ENCODE measurements at regions of chr4 and their contacts with region 1.

Region 1: GRCh38 chr4:88514557-88515511 is 8.7 kb downstream of the PYURF start:
- DNase-seq: no peak
- ATAC-seq: no peak
- H3K4me3 ChIP-seq: no peak overlapping the region
- H3K27ac ChIP-seq: no peak overlapping the region
- H3K4me1 ChIP-seq: no peaks in the 10 kb centered on the region
- H3K27me3 ChIP-seq: no peaks in the 10 kb centered on the region
- CTCF ChIP-seq: no peak
- EP300 ChIP-seq: no peak
- POLR2A ChIP-seq: no peak
- RAD21 ChIP-seq: no peak

Region 2: DNA sequence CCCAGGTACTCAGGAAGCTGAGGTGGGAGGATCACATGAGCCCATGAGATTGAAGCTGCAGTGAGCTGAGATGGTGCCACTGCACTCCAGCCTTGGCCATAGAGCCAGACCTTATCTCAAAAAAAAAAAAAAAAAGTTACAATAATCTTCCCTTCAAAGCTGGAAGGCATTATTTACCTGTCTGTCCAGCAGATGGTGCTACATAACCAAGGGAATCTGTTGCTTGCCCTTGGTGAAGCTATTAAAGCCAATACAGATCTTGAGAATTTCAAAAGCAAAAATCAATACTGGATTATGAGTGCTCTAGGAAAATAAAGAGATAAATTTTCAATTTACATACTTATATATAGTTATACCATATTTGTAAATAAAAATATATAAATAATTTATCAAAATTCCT is 481.5 kb before region 1 on chr4:
- CTCF ChIA-PET with region 1: interaction called, 17 read pairs
- POLR2A ChIA-PET with region 1: no interaction called
- RAD21 ChIA-PET with region 1: interaction called, 16 read pairs
- SMC1A ChIA-PET with region 1: interaction called, 8 read pairs
- in situ Hi-C with region 1: loop called (anchors 5 kb)
- intact Hi-C with region 1: loop called (anchors 2 kb)
- DNase-seq: no peak
- ATAC-seq: peak; percentile 87
- H3K4me3 ChIP-seq: no peak overlapping the region
- H3K27ac ChIP-seq: no peak overlapping the region
- H3K4me1 ChIP-seq: no peaks in the 10 kb centered on the region
- H3K27me3 ChIP-seq: no peaks in the 10 kb centered on the region
- CTCF ChIP-seq: peak; percentile 51 to 66 (median 64)
- EP300 ChIP-seq: no peak
- POLR2A ChIP-seq: no peak
- RAD21 ChIP-seq: peak; percentile 78

Region 3: GRCh38 chr4:88054901-88055300 is 459.9 kb before region 1 on chr4:
- CTCF ChIA-PET with region 1: no interaction called
- POLR2A ChIA-PET with region 1: no interaction called
- RAD21 ChIA-PET with region 1: no interaction called
- SMC1A ChIA-PET with region 1: no interaction called
- in situ Hi-C with region 1: no loop called
- intact Hi-C with region 1: no loop called
- DNase-seq: no peak
- ATAC-seq: peak; percentile 63
- H3K4me3 ChIP-seq: no peak overlapping the region
- H3K27ac ChIP-seq: no peak overlapping the region
- H3K4me1 ChIP-seq: no peaks in the 10 kb centered on the region
- H3K27me3 ChIP-seq: no peaks in the 10 kb centered on the region
- CTCF ChIP-seq: peak; percentile 20 to 44 (median 23); a peak in 4 of 6 replicates
- EP300 ChIP-seq: no peak
- POLR2A ChIP-seq: no peak
- RAD21 ChIP-seq: peak; percentile 35; the same call in 1 of the 2 replicates

Region 4: DNA sequence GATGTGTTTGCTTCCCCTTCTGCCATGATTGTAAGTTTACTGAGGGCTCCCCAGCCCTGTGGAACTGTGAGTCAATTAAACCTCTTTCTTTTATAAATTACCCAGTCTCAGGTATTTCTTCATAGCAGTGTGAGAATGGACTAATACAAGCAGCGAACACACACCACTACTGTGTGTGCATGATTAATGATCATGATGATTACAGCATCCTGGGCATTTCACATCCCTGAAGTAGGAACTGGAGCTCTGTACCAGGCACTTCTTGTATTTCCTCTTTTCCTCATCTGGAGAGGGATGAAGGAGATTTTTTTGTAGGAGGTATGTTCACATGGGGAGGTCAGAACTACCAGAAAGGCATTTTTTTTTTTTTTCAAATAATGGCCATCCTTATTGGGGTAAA is 291.3 kb before region 1 on chr4:
- CTCF ChIA-PET with region 1: interaction called, 172 read pairs
- POLR2A ChIA-PET with region 1: no interaction called
- RAD21 ChIA-PET with region 1: interaction called, 106 read pairs
- SMC1A ChIA-PET with region 1: interaction called, 112 read pairs
- in situ Hi-C with region 1: loop called (anchors 5 kb)
- intact Hi-C with region 1: loop called (anchors 1 kb)
- DNase-seq: no peak
- ATAC-seq: no peak
- H3K4me3 ChIP-seq: no peak overlapping the region
- H3K27ac ChIP-seq: no peak overlapping the region
- H3K4me1 ChIP-seq: no peaks in the 10 kb centered on the region
- H3K27me3 ChIP-seq: no peaks in the 10 kb centered on the region
- CTCF ChIP-seq: no peak
- EP300 ChIP-seq: no peak
- POLR2A ChIP-seq: no peak
- RAD21 ChIP-seq: no peak

Region 5: DNA sequence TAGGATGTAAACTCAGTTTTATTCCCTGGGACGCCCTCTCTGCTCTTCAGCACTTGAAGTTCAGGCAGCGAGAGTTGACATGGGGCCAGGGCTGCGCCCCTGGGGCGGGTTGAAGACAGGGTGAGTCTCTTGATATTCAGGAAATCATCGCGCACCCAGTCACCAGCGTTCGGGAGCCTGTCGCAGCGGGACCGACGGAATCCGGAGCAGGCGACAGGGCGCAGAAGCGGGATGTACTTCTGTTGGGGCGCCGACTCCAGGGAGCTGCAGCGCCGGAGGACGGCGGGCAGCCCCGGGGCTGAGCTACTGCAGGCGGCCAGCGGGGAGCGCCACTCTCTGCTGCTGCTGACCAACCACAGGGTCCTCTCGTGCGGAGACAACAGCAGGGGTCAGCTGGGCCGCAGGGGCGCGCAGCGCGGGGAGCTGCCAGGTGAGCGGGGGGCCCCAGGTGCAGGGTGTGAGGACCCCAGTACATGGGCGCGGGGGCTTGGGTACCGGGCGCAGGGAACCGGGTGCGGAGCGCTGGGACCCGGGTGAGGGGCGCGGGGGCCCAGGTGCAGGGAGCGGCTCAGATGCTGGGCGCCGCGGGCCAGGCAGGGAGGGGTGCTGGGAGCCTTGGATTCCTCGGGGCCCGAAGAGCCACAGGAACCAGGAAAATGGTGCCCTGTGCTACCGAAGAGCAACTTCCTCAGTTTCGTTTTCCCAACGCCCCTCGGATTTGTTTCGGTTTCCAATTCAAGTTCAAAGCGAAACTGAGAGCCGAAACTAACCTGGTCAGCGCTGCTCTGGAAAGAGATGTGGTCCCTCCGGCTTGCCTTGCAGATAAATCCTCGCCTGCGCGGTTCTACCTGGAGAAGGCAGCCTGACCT is 135.9 kb before region 1 on chr4 and contains the start of gene HERC6:
- CTCF ChIA-PET with region 1: interaction called, 26 read pairs
- POLR2A ChIA-PET with region 1: interaction called, 3 read pairs
- RAD21 ChIA-PET with region 1: interaction called, 32 read pairs
- SMC1A ChIA-PET with region 1: interaction called, 30 read pairs
- in situ Hi-C with region 1: loop called (anchors 5 kb)
- intact Hi-C with region 1: no loop called
- DNase-seq: peak; percentile 84
- ATAC-seq: peak; percentile 85
- H3K4me3 ChIP-seq: peak within 1 kb of the TSS; percentile 75
- H3K27ac ChIP-seq: peak within 1 kb of the TSS; percentile 82
- H3K4me1 ChIP-seq: peaks cover 24% of the 10 kb centered on the region
- H3K27me3 ChIP-seq: no peaks in the 10 kb centered on the region
- CTCF ChIP-seq: peak; percentile 69 to 83 (median 70)
- EP300 ChIP-seq: 0 out of 4 replicates have a peak, but pooled peaks of 1 of the 2 experiments have one; percentile 56
- POLR2A ChIP-seq: peak; percentile 78
- RAD21 ChIP-seq: peak; percentile 57
- polyA plus RNA-seq, gene HERC6: 1.7 to 2.2 TPM

Region 6: GRCh38 chr4:88481537-88481936 is 33.3 kb before region 1 on chr4:
- CTCF ChIA-PET with region 1: interaction called, 15 read pairs
- POLR2A ChIA-PET with region 1: no interaction called
- RAD21 ChIA-PET with region 1: interaction called, 3 read pairs
- SMC1A ChIA-PET with region 1: interaction called, 4 read pairs
- in situ Hi-C with region 1: no loop called
- intact Hi-C with region 1: no loop called
- DNase-seq: no peak
- ATAC-seq: no peak
- H3K4me3 ChIP-seq: no peak overlapping the region
- H3K27ac ChIP-seq: no peak overlapping the region
- H3K4me1 ChIP-seq: no peaks in the 10 kb centered on the region
- H3K27me3 ChIP-seq: no peaks in the 10 kb centered on the region
- CTCF ChIP-seq: no peak
- EP300 ChIP-seq: no peak
- POLR2A ChIP-seq: no peak
- RAD21 ChIP-seq: no peak